ENCODE measurements at regions of chr22 and their contacts with region 1.

Region 1: DNA sequence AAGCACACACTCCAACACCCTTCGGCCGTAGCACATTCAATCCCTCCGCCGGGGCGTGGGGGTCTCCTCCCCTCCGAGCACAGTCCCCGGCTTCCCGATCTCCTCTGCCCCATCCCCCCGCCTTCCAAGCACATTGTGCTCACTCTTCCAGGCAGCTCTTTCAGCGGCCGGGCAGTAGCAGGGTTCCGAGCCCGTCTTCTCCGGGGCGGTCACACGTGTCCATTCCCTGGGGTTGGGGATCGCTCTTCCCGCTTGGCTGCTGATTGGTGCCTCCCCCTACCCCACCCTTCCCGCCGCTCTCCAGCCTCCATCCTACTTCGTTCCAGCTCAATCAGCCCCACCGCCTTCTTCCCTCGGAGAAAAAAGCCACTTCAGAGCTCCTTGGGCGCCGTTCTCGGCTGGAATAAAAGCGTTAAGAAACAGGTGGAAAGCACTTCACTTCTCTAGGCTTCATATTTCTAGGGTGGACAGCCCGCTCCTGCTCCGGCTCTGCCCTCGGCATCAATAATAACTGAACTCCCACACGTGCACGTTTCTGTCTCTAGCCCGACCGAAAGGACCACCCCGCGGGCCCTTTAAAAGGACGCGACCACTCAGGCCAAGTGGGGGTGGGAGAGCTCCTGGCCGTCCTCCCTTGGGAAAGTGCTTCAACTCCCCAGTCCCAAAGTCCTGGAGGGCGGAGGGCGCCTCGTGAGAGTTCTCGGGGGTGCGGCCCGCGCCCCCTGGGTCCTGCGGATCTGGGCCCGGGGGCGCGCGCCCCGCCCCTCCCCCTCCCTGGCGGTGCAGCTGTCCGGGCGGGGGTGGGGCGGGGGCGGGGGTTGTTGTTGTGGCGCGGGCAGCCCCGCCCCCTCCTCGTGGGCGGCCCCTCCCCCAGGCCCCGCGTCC is 464 bp upstream of the CECR2 start:
- DNase-seq: peak; percentile 67
- ATAC-seq: peak; percentile 65 to 83

Region 2: DNA sequence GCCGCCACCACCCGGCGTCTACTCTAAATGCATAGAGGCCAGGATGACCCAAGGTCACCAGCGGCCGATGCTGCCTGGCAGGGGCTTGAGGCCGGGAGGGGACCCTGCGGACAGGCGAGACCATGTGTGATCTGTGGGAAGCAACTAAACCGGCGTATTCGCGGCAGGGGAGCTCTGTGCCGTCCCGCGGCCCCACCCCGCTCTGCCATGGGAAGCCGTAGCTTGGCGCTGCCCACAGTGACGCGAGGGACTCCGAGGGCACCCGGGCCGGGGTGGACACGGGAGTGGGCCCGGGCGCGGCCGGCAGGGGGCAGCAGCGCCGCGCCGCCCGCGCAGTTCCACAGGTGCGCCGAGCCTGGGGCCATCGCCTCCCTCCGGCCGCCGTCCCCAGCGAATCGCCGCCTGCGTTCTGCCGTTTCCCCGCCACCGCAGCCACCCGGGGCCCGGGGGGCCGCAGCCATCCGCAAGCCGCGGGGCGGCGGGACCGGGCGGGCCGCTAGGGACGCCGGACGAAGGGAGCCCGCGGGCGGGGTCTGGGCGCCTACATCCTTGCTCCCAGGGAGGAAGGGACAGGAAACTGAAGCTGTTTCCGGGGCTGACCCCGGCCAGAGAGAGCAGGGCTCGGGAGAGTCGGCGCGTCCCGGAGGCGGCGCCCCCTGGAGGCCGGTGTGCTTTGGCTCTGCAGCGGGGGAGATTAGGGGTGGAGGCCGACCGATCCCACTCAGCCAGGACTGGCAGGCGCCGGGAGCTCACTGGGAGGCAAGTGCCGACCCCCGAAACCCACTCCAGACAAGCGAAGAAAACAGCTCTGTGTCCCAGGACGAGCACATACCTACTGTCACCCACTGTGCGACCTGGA is 197.3 kb before region 1 on chr22:
- intact Hi-C with region 1: loop called in 1 of 2 experiments (anchors 5 kb)
- DNase-seq: peak; percentile 94
- ATAC-seq: peak; percentile 94 to 96

Region 3: DNA sequence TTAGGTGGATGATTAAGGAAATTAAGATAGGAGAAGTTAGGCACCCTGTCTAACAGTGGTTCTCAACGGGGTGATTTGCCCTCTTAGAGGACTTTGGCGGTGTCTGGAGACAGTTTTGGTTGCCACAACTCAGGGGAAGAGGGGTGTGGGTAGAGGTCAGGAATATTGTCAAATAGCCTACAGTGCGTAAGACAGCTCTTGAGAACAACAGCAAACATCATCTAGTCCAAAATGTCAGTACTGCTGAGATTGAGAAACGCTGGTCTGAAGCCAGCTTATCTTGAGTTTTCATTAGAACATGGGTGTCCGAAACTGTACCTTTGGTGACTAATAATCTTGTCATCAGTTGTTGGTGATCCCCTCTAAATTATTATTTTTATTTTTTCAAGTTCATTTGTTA is 38.8 kb after region 1 on chr22:
- intact Hi-C with region 1: loop called in 1 of 2 experiments (anchors 5 kb)
- DNase-seq: no peak
- ATAC-seq: peak; percentile 62 to 63

Region 4: DNA sequence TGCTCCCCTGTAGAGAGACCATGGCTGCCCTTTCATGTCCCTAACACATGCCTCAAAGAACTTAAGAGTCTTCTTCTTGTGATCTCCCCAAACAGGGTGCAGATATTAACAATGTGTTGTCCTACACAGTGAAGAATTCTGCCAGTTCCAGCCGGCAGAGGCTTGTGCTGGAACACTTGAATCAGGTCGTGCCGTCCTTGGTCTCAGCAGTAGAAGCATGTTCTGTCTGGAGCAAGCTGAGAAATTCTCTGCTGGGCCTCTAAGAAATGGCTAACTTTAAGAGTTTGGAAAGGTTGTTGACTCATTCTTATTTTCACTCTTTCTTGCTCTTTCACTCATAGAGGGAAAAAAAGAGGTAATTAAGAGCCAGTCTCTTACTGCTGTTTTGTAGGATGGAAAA is 123.5 kb after region 1 on chr22:
- intact Hi-C with region 1: loop called in 1 of 2 experiments (anchors 5 kb)
- DNase-seq: no peak
- ATAC-seq: peak; percentile 47 to 59

Region 5: GRCh38 chr22:17501679-17502285 is 133.0 kb after region 1 on chr22:
- intact Hi-C with region 1: loop called in 1 of 2 experiments (anchors 10 kb)
- DNase-seq: no peak
- ATAC-seq: peak; percentile 90